ENCODE measurements at regions of chr19 and their contacts with region 1.

Region 1: GRCh38 chr19:51259348-51260245 is 8.7 kb downstream of the SIGLECL1 start:
- DNase-seq: peak; percentile 66
- ATAC-seq: peak; percentile 65
- H3K4me3 Mint-ChIP-seq: no peak overlapping the region
- H3K27ac Mint-ChIP-seq: no peak overlapping the region
- H3K4me1 Mint-ChIP-seq: peaks cover 14% of the 10 kb centered on the region
- H3K27me3 Mint-ChIP-seq: peaks cover 3% of the 10 kb centered on the region; the same call in 1 of the 2 replicates
- CTCF ChIP-seq: peak; percentile 52

Region 2: GRCh38 chr19:51158474-51159129 is 101.0 kb before region 1 on chr19:
- CTCF ChIA-PET with region 1: interaction called, 85 read pairs
- POLR2A ChIA-PET with region 1: no interaction called
- DNase-seq: peak; percentile 93
- ATAC-seq: peak; percentile 92
- H3K4me3 Mint-ChIP-seq: no peak overlapping the region
- H3K27ac Mint-ChIP-seq: no peak overlapping the region; the same call in 1 of the 2 replicates
- H3K4me1 Mint-ChIP-seq: peaks cover 11% of the 10 kb centered on the region
- H3K27me3 Mint-ChIP-seq: peaks cover 6% of the 10 kb centered on the region
- CTCF ChIP-seq: peak; percentile 96

Region 3: GRCh38 chr19:51166846-51167490 is 92.6 kb before region 1 on chr19:
- CTCF ChIA-PET with region 1: interaction called, 22 read pairs
- POLR2A ChIA-PET with region 1: no interaction called
- DNase-seq: no peak
- ATAC-seq: no peak
- H3K4me3 Mint-ChIP-seq: no peak overlapping the region
- H3K27ac Mint-ChIP-seq: no peak overlapping the region
- H3K4me1 Mint-ChIP-seq: peaks cover 7% of the 10 kb centered on the region; the same call in 1 of the 2 replicates
- H3K27me3 Mint-ChIP-seq: peaks cover 22% of the 10 kb centered on the region
- CTCF ChIP-seq: no peak

Region 4: DNA sequence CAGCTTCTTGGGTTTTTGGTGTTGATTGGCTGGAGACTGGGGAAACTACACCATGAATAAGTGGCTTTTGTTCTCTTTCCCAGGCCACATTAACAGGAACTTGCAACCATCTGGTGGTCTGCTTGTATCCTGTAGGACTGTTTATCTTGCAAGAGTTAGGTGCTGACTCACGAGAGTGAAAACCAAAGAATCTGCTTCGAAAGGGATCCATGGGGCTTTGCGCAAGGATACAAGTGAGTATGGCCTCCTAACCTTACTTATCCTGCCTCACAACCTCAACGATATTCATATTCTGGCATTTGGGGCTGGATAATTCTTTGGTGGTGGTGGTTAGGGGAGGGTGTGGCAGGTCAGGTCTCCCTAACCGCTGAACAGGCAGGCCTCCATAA is 13.4 kb before region 1 on chr19:
- CTCF ChIA-PET with region 1: interaction called, 13 read pairs
- POLR2A ChIA-PET with region 1: no interaction called
- DNase-seq: no peak
- ATAC-seq: no peak; the same call in 1 of the 2 replicates
- H3K4me3 Mint-ChIP-seq: no peak overlapping the region
- H3K27ac Mint-ChIP-seq: no peak overlapping the region
- H3K4me1 Mint-ChIP-seq: 0 out of 2 replicates have a peak, but pooled peaks cover 3% of the 10 kb centered on the region
- H3K27me3 Mint-ChIP-seq: peaks cover 8% of the 10 kb centered on the region
- CTCF ChIP-seq: no peak

Region 5: DNA sequence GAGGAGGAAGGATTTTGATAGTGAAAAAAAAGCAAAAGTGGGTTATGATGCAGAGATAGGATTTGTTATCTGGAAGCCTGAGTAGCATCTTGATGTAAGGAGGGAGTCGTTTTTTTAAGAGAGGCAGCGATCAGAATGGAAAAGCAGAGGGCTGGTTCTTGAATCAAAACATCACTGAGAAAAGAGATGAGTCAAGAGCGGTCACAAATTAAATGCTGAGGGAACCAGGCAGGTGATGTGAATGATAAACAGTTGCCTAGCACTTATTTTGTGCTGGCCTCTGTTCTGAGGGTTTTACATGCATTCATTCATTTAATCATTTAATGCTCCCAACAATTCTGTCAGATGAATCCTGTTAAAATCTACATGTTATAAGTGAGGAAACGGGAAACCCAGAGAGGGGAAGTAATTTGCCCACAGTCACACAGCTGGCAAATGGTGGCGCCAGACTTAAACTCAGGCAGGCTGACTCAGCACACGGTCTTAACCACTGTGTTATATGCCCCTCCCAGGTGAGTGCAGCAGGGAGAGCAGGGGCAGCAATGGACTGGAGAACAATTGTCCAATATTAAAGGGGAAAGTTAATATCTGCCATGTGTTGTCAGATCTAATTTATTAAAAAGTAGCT is 12.7 kb after region 1 on chr19:
- CTCF ChIA-PET with region 1: interaction called, 34 read pairs
- POLR2A ChIA-PET with region 1: no interaction called
- DNase-seq: no peak
- ATAC-seq: peak; percentile 73
- H3K4me3 Mint-ChIP-seq: no peak overlapping the region
- H3K27ac Mint-ChIP-seq: no peak overlapping the region
- H3K4me1 Mint-ChIP-seq: peaks cover 15% of the 10 kb centered on the region
- H3K27me3 Mint-ChIP-seq: peaks cover 11% of the 10 kb centered on the region
- CTCF ChIP-seq: no peak

Region 6: GRCh38 chr19:51285682-51286081 is 26.1 kb after region 1 on chr19:
- CTCF ChIA-PET with region 1: no interaction called
- POLR2A ChIA-PET with region 1: no interaction called
- DNase-seq: no peak
- ATAC-seq: no peak
- H3K4me3 Mint-ChIP-seq: no peak overlapping the region
- H3K27ac Mint-ChIP-seq: no peak overlapping the region
- H3K4me1 Mint-ChIP-seq: no peaks in the 10 kb centered on the region
- H3K27me3 Mint-ChIP-seq: peaks cover 26% of the 10 kb centered on the region
- CTCF ChIP-seq: no peak

Measured in WTC11 (cell line).